ENCODE measurements at regions of chr17 and their contacts with region 1.

Region 1: GRCh38 chr17:67157732-67158639 is 87.0 kb downstream of the HELZ start:
- DNase-seq: no peak
- H3K4me3 ChIP-seq: no peak overlapping the region
- H3K27ac ChIP-seq: no peak overlapping the region
- H3K4me1 ChIP-seq: no peaks in the 10 kb centered on the region
- H3K27me3 ChIP-seq: no peaks in the 10 kb centered on the region
- CTCF ChIP-seq: peak; percentile 16

Region 2: DNA sequence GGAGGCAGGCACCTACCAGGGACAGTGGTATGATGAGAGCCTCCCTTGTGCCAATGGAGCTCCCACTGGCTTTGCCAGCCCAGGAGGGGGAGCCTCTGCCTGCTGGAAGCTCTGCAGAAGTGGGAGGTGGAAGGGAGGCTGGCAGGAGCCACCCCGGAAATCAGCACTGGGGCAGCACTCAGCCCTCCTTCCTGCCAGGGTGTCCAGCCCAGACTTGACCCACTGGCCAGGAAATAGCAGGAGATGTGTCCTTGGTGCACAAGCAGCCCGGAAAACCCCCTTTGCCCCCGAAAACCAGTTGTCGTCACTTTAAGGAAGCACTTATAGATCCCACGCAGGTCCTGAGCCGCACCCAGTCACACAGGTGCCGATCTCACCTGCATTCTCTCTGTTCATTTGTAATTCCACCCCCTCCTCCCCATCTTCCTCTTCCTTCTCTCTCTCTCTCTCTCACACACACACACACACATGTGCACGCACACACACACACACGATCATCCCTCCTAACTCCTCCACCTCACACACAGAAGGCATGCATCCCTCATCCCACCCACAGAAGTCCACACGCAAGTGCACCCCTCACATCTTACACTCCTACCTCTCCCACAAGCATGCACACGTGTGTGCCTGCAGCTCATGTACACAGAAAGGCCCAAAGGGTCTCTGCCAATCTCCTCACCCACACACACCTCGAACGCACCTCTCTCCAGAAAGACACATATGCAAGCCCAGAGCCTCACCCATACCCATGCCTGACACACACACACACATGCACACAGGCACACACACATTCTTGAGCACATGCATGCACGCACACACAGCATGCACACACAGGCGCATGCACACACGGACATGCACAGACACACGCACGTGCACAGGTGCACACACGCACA is 242.5 kb before region 1 on chr17:
- intact Hi-C with region 1: loop called (anchors 10 kb)
- DNase-seq: peak; percentile 58
- H3K4me3 ChIP-seq: peak overlapping the region; percentile 22
- H3K27ac ChIP-seq: no peak overlapping the region
- H3K4me1 ChIP-seq: no peaks in the 10 kb centered on the region
- H3K27me3 ChIP-seq: no peaks in the 10 kb centered on the region
- CTCF ChIP-seq: peak; percentile 39